ENCODE measurements at regions of chr2 and their contacts with region 1.

Region 1: GRCh38 chr2:237627441-237628246 is at the start of gene LRRFIP1:
- DNase-seq: peak; percentile 31
- H3K4me3 ChIP-seq: peak within 1 kb of the TSS; percentile 23 to 81 (median 42)
- H3K27ac ChIP-seq: peak within 1 kb of the TSS; percentile 27
- H3K4me1 ChIP-seq: peaks cover 13% of the 10 kb centered on the region
- H3K27me3 ChIP-seq: no peaks in the 10 kb centered on the region
- CTCF ChIP-seq: peak in 1 of 2 donors; percentile 17
- POLR2A ChIP-seq: no peak
- total RNA-seq, gene LRRFIP1: 162 and 179 TPM in 2 replicates

Region 2: GRCh38 chr2:236250909-236251579 is 1376.6 kb before region 1 on chr2:
- CTCF ChIA-PET with region 1: no interaction called
- POLR2A ChIA-PET with region 1: no interaction called
- dilution Hi-C with region 1: no loop called
- intact Hi-C with region 1: loop called (anchors 5 kb)
- DNase-seq: peak; percentile 83
- H3K4me3 ChIP-seq: no peak overlapping the region
- H3K27ac ChIP-seq: no peak overlapping the region
- H3K4me1 ChIP-seq: peaks cover 16% of the 10 kb centered on the region
- H3K27me3 ChIP-seq: no peaks in the 10 kb centered on the region
- CTCF ChIP-seq: no peak
- POLR2A ChIP-seq: no peak

Region 3: GRCh38 chr2:237616734-237617586 is 10.7 kb before region 1 on chr2:
- CTCF ChIA-PET with region 1: interaction called, 4 read pairs
- POLR2A ChIA-PET with region 1: interaction called, 4 read pairs
- dilution Hi-C with region 1: no loop called
- intact Hi-C with region 1: loop called (anchors 1 kb)
- DNase-seq: peak; percentile 91
- H3K4me3 ChIP-seq: no peak overlapping the region
- H3K27ac ChIP-seq: peak overlapping the region; percentile 99
- H3K4me1 ChIP-seq: peaks cover 54% of the 10 kb centered on the region
- H3K27me3 ChIP-seq: no peaks in the 10 kb centered on the region
- CTCF ChIP-seq: no peak
- POLR2A ChIP-seq: peak; percentile 28

Measured in endothelial cell of umbilical vein (primary cell).